ENCODE measurements at regions of chr17 and their contacts with region 1.

Region 1: DNA sequence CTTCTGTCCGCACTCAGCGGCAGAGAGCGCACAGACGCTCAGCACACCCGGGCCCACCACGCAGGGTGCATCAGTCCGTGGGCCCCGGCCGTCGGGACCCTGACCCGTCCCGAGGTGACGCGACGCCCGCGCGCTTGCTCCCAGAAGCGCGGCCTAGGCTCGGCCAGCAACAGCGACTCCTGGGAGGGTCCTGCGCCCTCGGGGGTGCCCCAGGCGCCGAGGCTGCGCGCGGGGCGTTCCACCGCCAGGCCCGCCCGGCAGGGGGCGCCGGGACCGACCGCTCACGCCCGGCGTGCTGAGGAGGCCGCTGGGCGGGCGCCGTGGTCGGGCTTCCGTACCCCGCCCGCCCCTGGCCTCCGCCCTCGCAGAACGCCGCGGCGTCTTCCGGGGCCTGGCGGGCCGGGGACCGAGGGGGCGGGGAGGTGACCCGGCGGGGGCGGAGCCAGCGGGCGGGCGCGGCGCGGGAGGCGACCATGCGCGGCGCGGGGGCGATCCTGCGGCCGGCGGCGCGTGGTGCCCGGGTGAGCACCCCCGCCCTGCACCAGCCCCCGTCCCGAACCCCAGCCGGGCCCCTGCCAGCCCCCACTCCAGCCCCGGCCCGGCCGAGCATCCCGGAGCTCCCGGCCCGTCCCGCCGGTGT is at the start of gene CISD3:
- DNase-seq: peak; percentile 86 to 88
- ATAC-seq: peak; percentile 77 to 79
- H3K4me3 ChIP-seq: peak within 1 kb of the TSS; percentile 77
- H3K27ac ChIP-seq: peak within 1 kb of the TSS; percentile 91 to 95
- H3K4me1 ChIP-seq: peaks cover 43% of the 10 kb centered on the region
- CTCF ChIP-seq: peak; percentile 98
- EP300 ChIP-seq: no peak
- POLR2A ChIP-seq: peak; percentile 59
- RAD21 ChIP-seq: peak; percentile 19 to 56; a peak in 4 of 5 replicates
- polyA plus RNA-seq, gene CISD3: 24.5 and 32.6 TPM in 2 replicates

Region 2: GRCh38 chr17:38617011-38617867 is 112.8 kb before region 1 on chr17:
- CTCF ChIA-PET with region 1: no interaction called
- POLR2A ChIA-PET with region 1: no interaction called
- DNase-seq: no peak
- ATAC-seq: peak in 1 of 2 experiments; percentile 26; a peak in 2 of 6 replicates
- H3K4me3 ChIP-seq: no peak overlapping the region
- H3K27ac ChIP-seq: no peak overlapping the region
- H3K4me1 ChIP-seq: peaks cover 13% of the 10 kb centered on the region; the same call in 2 of the 3 replicates
- CTCF ChIP-seq: no peak
- EP300 ChIP-seq: no peak
- POLR2A ChIP-seq: no peak
- RAD21 ChIP-seq: no peak

Region 3: GRCh38 chr17:38685491-38685890 is 44.5 kb before region 1 on chr17:
- CTCF ChIA-PET with region 1: interaction called, 51 read pairs
- POLR2A ChIA-PET with region 1: no interaction called
- DNase-seq: no peak
- ATAC-seq: no peak; a peak in 1 of 6 replicates
- H3K4me3 ChIP-seq: no peak overlapping the region
- H3K27ac ChIP-seq: no peak overlapping the region
- H3K4me1 ChIP-seq: no peaks in the 10 kb centered on the region
- CTCF ChIP-seq: no peak
- EP300 ChIP-seq: no peak
- POLR2A ChIP-seq: no peak
- RAD21 ChIP-seq: no peak

Region 4: DNA sequence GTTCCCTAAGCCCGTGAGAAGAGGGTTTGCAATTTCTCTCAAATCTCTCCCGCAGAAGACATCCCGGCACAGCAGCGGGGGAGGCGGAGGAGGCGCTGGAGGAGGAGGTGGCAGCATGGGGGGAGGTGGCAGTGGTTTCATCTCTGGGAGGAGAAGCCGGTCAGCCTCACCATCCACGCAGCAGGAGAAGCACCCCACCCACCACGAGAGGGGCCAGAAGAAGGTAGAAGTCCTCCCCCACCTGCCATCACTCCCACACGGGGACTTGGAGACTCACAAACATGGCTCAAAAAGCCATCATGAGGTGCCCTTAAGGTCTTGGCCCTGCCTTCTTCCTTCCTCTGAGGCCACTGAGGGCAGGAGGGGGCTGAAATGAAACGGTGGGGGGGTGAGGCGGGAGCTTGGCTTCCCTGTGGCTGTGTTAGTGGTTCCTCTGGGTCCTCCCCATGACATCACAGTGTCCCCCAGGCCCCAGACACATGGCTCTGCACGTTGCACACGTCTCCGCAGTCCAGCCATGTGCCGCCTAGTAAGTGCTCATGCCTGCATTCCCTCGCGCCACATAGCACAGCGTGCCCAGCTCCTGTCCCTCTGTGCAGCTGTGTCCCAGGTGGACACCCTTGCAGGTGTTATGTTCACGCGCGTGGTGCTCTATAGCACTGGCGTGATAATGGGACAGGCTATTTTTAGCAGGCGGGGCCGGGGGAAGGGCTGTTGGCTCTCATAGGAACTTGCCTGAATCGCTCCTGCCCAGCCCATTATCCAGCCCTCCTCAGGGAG is 18.0 kb before region 1 on chr17:
- CTCF ChIA-PET with region 1: interaction called, 102 read pairs
- POLR2A ChIA-PET with region 1: interaction called, 4 read pairs
- DNase-seq: no peak
- ATAC-seq: no peak
- H3K4me3 ChIP-seq: no peak overlapping the region
- H3K27ac ChIP-seq: no peak overlapping the region
- H3K4me1 ChIP-seq: peaks cover 8% of the 10 kb centered on the region; the same call in 2 of the 3 replicates
- CTCF ChIP-seq: no peak
- EP300 ChIP-seq: no peak
- POLR2A ChIP-seq: no peak
- RAD21 ChIP-seq: no peak

Region 5: DNA sequence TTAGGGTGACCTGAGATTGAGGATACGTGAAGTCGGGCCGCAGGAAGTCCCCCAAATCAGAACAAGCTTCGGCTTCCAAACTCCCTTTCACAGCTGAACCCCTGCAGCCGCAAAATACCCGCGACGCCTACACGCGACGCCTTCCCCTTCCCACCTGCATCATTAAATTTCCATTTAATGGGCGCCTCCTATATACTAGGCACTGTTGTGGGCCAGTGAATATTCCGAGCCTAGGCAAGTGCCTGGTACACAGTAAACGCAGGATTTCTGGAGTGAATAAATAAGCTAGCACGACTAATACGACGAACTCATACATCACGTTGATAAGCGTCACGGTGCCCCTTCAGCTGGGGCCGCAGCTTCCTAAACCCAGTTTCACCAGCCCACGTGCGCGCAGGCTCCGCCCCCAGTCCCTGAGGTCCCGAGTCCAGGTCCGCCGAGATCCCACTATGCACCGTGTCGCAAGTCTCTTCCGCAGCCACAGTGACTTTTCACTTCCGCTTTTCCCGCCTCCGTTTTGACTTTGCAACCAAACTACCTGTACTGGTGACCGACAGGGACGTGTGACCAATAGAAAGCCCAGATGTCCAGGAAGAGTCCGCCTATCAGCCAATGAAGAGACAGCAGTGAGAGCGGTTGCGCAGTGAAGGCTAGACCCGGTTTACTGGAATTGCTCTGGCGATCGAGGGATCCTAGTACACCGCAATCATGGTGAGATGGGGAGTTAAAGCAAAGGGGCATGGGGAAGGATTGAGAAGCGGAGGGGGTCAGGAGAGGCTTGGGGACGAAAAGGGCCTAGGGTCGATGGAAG is 22.3 kb after region 1 on chr17 and contains the start of gene PSMB3:
- CTCF ChIA-PET with region 1: interaction called, 107 read pairs
- POLR2A ChIA-PET with region 1: interaction called, 8 read pairs
- DNase-seq: peak; percentile 100
- ATAC-seq: peak; percentile 70 to 85
- H3K4me3 ChIP-seq: peak within 1 kb of the TSS; percentile 96
- H3K27ac ChIP-seq: peak within 1 kb of the TSS; percentile 90 to 98
- H3K4me1 ChIP-seq: peaks cover 22% of the 10 kb centered on the region
- CTCF ChIP-seq: no peak
- EP300 ChIP-seq: no peak
- POLR2A ChIP-seq: peak; percentile 64
- RAD21 ChIP-seq: no peak
- polyA plus RNA-seq, gene PSMB3: 417 and 467 TPM in 2 replicates

Measured in A549 (cell line).